ENCODE measurements at regions of chr20 and their contacts with region 1.

Region 1: DNA sequence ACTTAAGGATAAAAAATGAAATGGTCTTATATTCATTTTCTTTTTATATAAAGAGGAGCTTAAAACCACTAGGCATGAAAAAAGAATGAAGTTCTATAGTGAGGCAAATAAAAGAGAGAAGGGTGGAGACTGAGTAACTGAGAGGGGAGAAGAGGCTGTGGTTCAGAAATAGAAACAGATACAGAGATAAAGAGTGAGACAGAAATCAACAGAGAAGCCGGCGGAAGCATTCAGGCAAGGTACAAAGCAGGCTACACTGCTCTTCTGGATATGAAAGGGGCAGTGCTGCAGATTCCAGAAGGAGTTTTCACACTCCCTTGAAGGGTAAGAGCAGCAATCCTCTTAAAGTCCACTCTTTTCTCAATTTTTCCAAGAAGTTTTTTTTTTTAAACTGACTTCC is 29.9 kb downstream of the NFATC2 start:
- DNase-seq: no peak
- H3K4me3 ChIP-seq: no peak overlapping the region
- H3K27ac ChIP-seq: no peak overlapping the region
- H3K4me1 ChIP-seq: no peaks in the 10 kb centered on the region
- H3K27me3 ChIP-seq: no peaks in the 10 kb centered on the region
- CTCF ChIP-seq: no peak

Region 2: DNA sequence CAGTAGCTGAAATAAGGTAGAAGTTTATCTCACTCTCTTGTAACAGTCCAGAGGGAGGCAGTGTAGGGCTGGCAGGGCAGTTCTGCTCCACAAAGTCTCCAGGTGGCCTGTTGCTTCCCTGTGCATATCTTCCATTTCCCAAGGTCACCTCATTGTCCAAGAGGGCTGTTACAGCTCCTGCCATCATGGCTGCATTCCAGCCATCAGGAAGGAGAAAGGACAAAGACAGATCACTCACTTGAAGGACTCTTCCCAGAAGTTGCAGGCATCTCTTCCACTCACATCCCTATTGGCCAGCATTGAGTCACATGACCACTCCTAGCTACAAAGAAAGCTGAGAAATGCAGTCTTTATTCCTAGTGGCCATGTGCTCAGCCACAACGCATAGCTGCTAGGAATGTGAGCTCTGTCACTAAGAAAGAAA is 339.7 kb before region 1 on chr20:
- intact Hi-C with region 1: no loop called
- DNase-seq: no peak
- H3K4me3 ChIP-seq: no peak overlapping the region
- H3K27ac ChIP-seq: no peak overlapping the region
- H3K4me1 ChIP-seq: no peaks in the 10 kb centered on the region
- H3K27me3 ChIP-seq: no peaks in the 10 kb centered on the region
- CTCF ChIP-seq: no peak

Region 3: GRCh38 chr20:51480507-51481270 is 32.0 kb before region 1 on chr20:
- intact Hi-C with region 1: loop called (anchors 5 kb)
- DNase-seq: no peak
- H3K4me3 ChIP-seq: no peak overlapping the region
- H3K27ac ChIP-seq: no peak overlapping the region
- H3K4me1 ChIP-seq: no peaks in the 10 kb centered on the region
- H3K27me3 ChIP-seq: no peaks in the 10 kb centered on the region
- CTCF ChIP-seq: no peak